ENCODE measurements at regions of chr11 and their contacts with region 1.

Region 1: DNA sequence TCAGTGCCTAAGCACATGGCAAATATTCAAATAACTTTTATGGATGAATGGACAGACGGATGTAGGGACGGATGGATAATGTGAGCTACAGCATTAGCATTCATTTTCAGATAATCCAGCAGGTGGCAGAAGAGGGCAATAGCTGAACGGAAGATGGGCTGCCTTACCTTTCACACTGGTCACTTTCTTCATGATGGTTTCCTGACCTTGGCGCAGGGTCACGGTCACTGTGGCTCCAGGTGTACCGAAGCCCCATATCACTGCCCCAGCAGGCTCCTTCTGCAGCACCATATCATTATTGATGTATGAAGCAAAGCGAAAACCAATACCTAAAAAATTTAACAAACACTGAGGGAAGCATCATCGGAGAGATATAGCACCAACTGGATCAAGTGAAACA is 4.3 kb downstream of the SIAE start:
- DNase-seq: peak; percentile 28
- ATAC-seq: peak; percentile 46
- H3K4me3 ChIP-seq: no peak overlapping the region
- H3K27ac ChIP-seq: no peak overlapping the region
- H3K4me1 ChIP-seq: peaks cover 0 to 12% of the 10 kb centered on the region in 2 experiments; a peak in 2 of 4 replicates
- H3K27me3 ChIP-seq: no peaks in the 10 kb centered on the region
- CTCF ChIP-seq: peak; percentile 40 to 87 (median 67)
- POLR2A ChIP-seq: no peak
- RAD21 ChIP-seq: peak; percentile 94

Region 2: DNA sequence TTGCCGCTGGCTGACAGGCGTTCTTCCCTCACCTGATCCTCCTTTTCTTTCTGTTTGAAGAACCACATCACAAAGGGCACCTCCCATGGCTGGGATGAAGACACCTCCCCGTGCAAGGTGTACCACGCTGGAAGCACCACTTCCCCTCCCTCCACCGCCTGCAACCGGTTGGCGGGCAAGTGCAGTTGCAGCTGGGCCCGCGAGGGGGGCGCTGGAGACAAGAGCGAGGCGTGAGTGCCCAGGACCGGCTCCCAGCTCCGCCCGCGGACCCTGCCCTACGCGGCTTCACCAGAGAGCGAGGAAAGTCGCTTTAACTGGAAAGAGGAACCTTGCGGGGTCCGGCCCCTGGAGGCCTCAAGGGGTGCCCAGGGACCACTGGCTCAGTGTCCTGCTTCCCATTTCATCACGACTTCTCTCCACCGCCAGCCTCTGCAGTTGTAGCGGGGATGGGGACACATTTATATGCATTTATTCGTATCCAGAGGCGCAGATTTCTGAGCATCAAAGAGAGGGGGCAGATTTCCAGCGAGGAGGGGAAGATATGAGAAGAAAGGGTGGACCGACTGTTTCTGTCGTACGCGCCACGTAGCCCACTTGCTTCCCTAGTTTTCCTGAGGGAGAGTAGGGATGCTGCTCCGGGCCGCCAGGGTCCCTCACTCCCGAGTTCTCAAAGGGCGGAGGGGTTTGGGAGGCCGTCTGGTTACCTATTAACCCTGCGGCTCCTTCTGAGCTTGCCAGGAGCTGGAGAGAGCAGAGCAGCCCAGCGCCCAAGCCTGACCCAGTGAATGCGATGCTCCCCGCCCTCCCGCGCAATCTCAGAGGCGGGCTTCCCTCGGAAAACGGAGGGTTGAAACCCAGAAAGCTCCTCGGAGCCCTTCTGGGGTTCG is 89.4 kb after region 1 on chr11:
- CTCF ChIA-PET with region 1: interaction called, 28 read pairs
- POLR2A ChIA-PET with region 1: no interaction called
- RAD21 ChIA-PET with region 1: interaction called in 1 of 2 experiments, 5 read pairs
- intact Hi-C with region 1: loop called (anchors 1 kb)
- DNase-seq: peak; percentile 59
- ATAC-seq: peak; percentile 79
- H3K4me3 ChIP-seq: peak overlapping the region; percentile 5 to 28; a peak in 3 of 4 replicates
- H3K27ac ChIP-seq: no peak overlapping the region
- H3K4me1 ChIP-seq: peaks cover 14 to 36% of the 10 kb centered on the region in 2 experiments
- H3K27me3 ChIP-seq: no peaks in the 10 kb centered on the region
- CTCF ChIP-seq: peak; percentile 64 to 72 (median 72); a peak in 5 of 6 replicates
- POLR2A ChIP-seq: no peak
- RAD21 ChIP-seq: peak; percentile 61

Region 3: DNA sequence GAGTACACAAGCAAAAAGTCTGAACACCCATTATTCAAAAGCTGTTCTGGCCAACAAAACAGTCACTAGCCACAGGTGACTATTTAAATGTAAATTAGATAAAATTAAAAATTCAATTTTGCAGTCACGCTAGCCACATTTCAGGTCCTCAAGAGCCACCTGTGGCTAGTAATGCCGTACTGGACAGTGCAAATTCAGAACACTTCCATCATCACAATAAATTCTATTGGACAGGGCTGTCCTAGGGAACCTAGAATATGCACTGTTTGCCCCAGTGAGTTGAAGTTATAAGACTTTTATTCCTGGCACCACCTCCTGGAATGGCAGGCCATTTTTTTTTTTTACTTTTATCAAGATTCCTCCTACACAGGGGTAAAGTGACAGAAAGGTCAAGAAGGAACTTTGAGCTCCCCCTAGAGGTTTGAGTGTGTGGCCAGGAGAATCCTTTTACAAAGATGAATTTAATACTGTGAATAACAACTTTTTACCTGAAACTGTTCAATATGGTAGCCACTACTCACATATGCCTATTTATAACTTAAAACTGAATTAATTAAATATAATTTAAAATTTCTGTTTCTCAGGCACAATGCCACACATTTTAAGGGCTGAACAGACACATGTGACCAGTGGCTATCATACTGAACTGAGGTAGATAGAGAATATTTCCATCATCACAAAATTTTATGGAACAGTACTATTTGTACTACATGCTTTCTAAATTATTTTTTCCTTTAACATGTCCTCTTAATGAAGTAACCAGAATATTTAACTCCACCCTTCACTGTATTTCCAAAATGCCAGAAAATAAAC is 124.5 kb after region 1 on chr11:
- CTCF ChIA-PET with region 1: interaction called, 18 read pairs
- POLR2A ChIA-PET with region 1: interaction called, 3 read pairs
- RAD21 ChIA-PET with region 1: interaction called, 3 to 5 read pairs
- intact Hi-C with region 1: loop called (anchors 1 kb)
- DNase-seq: peak; percentile 43
- ATAC-seq: peak; percentile 93
- H3K4me3 ChIP-seq: no peak overlapping the region
- H3K27ac ChIP-seq: no peak overlapping the region
- H3K4me1 ChIP-seq: peaks cover 3 to 14% of the 10 kb centered on the region in 2 experiments; a peak in 3 of 4 replicates
- H3K27me3 ChIP-seq: no peaks in the 10 kb centered on the region
- CTCF ChIP-seq: peak; percentile 69 to 87 (median 73); a peak in 5 of 6 replicates
- POLR2A ChIP-seq: no peak
- RAD21 ChIP-seq: peak; percentile 77

Region 4: GRCh38 chr11:124865921-124866583 is 196.9 kb after region 1 on chr11:
- CTCF ChIA-PET with region 1: no interaction called
- POLR2A ChIA-PET with region 1: no interaction called
- RAD21 ChIA-PET with region 1: no interaction called
- intact Hi-C with region 1: loop called (anchors 1 kb)
- DNase-seq: no peak
- ATAC-seq: peak; percentile 69
- H3K4me3 ChIP-seq: no peak overlapping the region
- H3K27ac ChIP-seq: no peak overlapping the region
- H3K4me1 ChIP-seq: peaks cover 4 to 9% of the 10 kb centered on the region in 2 experiments; a peak in 2 of 4 replicates
- H3K27me3 ChIP-seq: peaks cover 34% of the 10 kb centered on the region; the same call in 1 of the 2 replicates
- CTCF ChIP-seq: peak; percentile 61 to 80 (median 71)
- POLR2A ChIP-seq: no peak
- RAD21 ChIP-seq: peak; percentile 46

Region 5: DNA sequence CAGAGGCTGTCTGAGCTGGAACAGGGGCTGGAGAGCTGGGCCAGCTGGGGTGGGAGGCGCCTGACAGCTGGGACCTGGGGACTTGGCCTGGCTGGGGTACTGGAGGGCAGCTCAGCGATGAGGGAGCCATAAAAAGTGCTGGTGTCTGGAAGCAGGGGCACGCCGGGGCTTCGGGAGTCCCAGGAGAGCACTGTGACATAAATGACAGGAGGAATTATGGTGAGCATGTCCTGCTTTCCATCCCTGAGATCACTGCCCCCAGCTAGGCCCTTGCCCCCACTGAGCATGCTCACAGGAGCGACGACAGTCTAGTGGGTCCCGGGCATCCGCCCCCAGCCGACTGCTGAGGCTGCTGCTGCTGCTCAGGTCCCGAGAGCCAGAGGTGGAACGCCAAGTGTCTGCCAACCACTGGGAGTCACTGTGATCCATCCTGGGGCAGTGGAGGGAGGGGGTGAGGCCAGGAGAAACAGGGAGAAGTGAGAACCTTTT is 222.2 kb after region 1 on chr11:
- CTCF ChIA-PET with region 1: no interaction called
- POLR2A ChIA-PET with region 1: no interaction called
- RAD21 ChIA-PET with region 1: no interaction called
- intact Hi-C with region 1: no loop called
- DNase-seq: no peak
- ATAC-seq: peak; percentile 74
- H3K4me3 ChIP-seq: no peak overlapping the region
- H3K27ac ChIP-seq: no peak overlapping the region
- H3K4me1 ChIP-seq: no peaks in the 10 kb centered on the region; a peak in 1 of 4 replicates
- H3K27me3 ChIP-seq: 0 out of 2 replicates have a peak, but pooled peaks cover 3% of the 10 kb centered on the region
- CTCF ChIP-seq: peak in 1 of 3 experiments; percentile 13; a peak in 2 of 6 replicates
- POLR2A ChIP-seq: no peak
- RAD21 ChIP-seq: peak; percentile 30; the same call in 1 of the 2 replicates

Measured in HCT116 (cell line).